Activated CD8-positive, alpha-beta T cell treated with anti-CD3 and anti-CD28 coated beads, Interleukin-2, amount 10 ng/mL, durations not matched to agents 7 days and 5 days (primary cell): ENCODE measurements at regions of chr19 and their contacts with region 1.

Region 1: GRCh38 chr19:45059278-45059965 is 16.9 kb downstream of the ZNF296 start:
- DNase-seq: peak; percentile 90
- ATAC-seq: peak; percentile 88
- H3K4me3 Mint-ChIP-seq: no peak overlapping the region
- H3K27ac Mint-ChIP-seq: no peak overlapping the region
- H3K4me1 Mint-ChIP-seq: no peaks in the 10 kb centered on the region
- H3K27me3 Mint-ChIP-seq: no peaks in the 10 kb centered on the region

Region 2: GRCh38 chr19:44988896-44989556 is 70.4 kb before region 1 on chr19:
- CTCF ChIA-PET with region 1: interaction called, 17 read pairs
- POLR2A ChIA-PET with region 1: no interaction called
- DNase-seq: peak; percentile 70
- ATAC-seq: peak; percentile 70
- H3K4me3 Mint-ChIP-seq: no peak overlapping the region
- H3K27ac Mint-ChIP-seq: no peak overlapping the region
- H3K4me1 Mint-ChIP-seq: peaks cover 10% of the 10 kb centered on the region
- H3K27me3 Mint-ChIP-seq: no peaks in the 10 kb centered on the region

Region 3: DNA sequence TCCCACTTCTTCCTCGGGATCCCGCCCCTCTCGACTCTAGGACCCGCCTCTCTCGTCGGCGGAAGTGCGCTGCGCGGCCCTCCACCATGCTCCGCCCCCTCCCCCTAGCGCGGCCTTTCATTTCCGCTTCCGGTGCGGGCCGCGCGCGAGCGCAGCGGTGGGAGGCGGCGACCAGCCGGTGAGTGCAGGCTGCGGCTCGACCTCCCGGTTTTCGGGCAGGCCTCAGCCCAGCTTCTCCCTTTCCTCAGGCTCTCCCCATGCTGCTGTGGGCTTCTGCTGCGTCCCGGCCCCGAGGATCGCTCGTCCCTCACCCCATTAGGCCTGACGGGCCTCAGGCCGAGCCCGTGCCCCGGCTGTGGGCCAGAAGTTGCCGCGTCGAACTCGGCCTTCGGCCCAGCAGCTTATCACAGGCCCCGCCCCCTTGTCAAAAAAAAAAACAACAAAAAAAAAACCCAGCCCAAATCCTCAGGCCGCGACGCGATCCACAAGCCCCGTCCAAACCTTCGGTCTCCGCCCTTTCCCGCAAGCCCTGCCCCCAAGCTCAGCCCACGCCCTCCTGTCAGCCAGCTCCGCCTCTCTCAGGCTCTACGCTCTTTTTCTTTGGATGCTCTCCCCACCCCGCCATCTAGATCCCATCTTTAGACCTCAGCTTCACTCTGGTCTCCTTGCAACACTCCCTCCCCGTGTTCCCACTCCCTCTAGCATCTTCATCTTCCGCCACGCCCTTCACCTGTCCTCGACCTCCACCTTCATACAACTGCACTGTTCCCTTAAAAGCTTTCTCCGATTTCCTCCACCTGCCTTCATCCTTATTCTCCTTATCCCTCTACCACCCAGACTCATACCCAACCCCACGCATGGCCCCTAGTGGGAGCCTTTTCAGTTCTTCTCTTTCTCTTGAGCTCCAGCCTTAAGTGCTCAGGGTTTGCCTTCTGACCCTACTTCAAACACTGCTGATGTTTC is 20.2 kb before region 1 on chr19 and contains the start of gene CLASRP:
- CTCF ChIA-PET with region 1: interaction called, 24 read pairs
- POLR2A ChIA-PET with region 1: interaction called, 3 read pairs
- DNase-seq: peak; percentile 92
- ATAC-seq: peak; percentile 94
- H3K4me3 Mint-ChIP-seq: peak within 1 kb of the TSS; percentile 90
- H3K27ac Mint-ChIP-seq: peak within 1 kb of the TSS; percentile 94
- H3K4me1 Mint-ChIP-seq: peaks cover 28% of the 10 kb centered on the region
- H3K27me3 Mint-ChIP-seq: no peaks in the 10 kb centered on the region
- total RNA-seq, gene CLASRP: 82.5 to 94.5 TPM

Region 4: DNA sequence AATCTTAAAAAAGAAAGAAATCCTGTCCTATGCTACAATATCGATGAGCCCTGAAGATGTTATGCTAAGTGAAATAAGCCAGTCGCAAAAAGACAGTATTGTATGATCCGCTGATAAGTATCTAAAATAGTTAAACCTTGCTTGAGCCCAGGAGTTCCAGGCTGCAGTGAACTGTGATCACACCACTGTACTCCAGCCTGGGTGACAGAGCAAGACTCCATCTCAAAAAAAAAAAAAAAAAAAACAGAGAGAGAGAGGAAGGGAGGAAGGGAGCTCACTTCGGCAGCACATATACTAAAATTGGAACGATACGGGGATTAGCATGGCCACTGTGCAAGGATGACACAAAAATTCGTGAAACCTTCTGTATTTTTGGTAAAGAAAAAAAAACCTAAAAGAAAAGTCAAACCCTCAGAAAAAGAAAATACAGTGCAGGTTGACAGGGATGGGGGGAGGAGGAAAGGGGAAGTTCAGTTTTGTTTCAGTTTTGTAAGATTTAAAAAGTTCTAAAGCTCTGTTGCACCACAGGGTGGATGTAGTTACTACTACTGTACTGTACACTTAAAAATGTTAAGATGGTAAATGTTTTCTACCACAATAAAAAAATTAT is 12.1 kb before region 1 on chr19:
- CTCF ChIA-PET with region 1: interaction called, 24 read pairs
- POLR2A ChIA-PET with region 1: interaction called, 3 read pairs
- DNase-seq: no peak
- ATAC-seq: no peak
- H3K4me3 Mint-ChIP-seq: peak overlapping the region; percentile 67
- H3K27ac Mint-ChIP-seq: peak overlapping the region; percentile 85
- H3K4me1 Mint-ChIP-seq: peaks cover 29% of the 10 kb centered on the region
- H3K27me3 Mint-ChIP-seq: no peaks in the 10 kb centered on the region

Region 5: DNA sequence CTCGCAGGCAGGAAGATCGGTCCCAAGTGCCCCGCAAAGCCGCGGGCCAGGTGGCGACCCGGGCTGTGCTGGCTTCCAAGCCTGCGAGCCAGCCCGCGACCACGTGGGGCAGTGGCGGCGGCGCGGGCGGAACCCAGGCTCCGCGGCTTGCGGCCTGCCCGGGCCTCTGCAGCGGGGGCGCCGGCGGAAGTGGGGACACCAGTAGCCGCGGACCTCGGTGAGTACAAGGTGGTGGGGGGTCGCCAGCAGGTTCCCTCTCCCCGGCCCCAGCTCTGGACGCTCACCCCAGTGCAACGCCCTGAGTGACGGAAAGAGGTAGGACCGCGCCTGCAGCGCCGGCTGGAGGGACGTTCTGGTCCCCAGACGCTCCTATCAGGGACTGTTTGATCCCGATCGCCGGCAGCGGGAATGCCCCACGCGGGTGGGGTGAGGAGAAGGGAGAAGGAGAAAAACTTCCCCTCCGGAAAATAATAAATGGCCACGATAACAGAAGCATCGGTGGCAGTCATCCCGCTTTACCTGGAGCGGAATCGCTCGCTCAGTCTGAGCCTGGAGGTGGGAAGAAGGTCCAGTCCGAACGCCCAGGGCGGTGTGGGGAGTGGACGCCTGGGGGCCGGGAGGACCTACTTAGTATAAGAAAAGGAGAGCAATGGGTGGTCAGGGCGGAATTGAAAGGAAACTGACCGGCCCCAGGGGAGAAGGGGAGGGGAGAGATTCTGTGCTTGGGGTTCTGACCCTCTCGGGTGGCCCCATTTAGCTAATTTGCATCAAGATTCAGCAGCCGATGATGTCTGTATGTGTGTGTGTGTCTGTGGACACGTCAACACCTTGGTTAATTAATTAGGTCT is 19.9 kb after region 1 on chr19 and contains the start of gene GEMIN7:
- CTCF ChIA-PET with region 1: interaction called, 10 read pairs
- POLR2A ChIA-PET with region 1: no interaction called
- DNase-seq: peak; percentile 82
- ATAC-seq: peak; percentile 63
- H3K4me3 Mint-ChIP-seq: peak within 1 kb of the TSS; percentile 98
- H3K27ac Mint-ChIP-seq: peak within 1 kb of the TSS; percentile 86
- H3K4me1 Mint-ChIP-seq: peaks cover 55% of the 10 kb centered on the region
- H3K27me3 Mint-ChIP-seq: no peaks in the 10 kb centered on the region
- total RNA-seq, gene GEMIN7: 30.2 to 31.7 TPM

Region 6: GRCh38 chr19:45092747-45093678 is 33.6 kb after region 1 on chr19 and contains the start of gene PPP1R37:
- CTCF ChIA-PET with region 1: interaction called, 10 read pairs
- POLR2A ChIA-PET with region 1: no interaction called
- DNase-seq: peak; percentile 94
- ATAC-seq: peak; percentile 82
- H3K4me3 Mint-ChIP-seq: peak within 1 kb of the TSS; percentile 83
- H3K27ac Mint-ChIP-seq: peak within 1 kb of the TSS; percentile 95
- H3K4me1 Mint-ChIP-seq: peaks cover 70% of the 10 kb centered on the region
- H3K27me3 Mint-ChIP-seq: no peaks in the 10 kb centered on the region
- total RNA-seq, gene PPP1R37: 28.3 to 29.2 TPM

Region 7: DNA sequence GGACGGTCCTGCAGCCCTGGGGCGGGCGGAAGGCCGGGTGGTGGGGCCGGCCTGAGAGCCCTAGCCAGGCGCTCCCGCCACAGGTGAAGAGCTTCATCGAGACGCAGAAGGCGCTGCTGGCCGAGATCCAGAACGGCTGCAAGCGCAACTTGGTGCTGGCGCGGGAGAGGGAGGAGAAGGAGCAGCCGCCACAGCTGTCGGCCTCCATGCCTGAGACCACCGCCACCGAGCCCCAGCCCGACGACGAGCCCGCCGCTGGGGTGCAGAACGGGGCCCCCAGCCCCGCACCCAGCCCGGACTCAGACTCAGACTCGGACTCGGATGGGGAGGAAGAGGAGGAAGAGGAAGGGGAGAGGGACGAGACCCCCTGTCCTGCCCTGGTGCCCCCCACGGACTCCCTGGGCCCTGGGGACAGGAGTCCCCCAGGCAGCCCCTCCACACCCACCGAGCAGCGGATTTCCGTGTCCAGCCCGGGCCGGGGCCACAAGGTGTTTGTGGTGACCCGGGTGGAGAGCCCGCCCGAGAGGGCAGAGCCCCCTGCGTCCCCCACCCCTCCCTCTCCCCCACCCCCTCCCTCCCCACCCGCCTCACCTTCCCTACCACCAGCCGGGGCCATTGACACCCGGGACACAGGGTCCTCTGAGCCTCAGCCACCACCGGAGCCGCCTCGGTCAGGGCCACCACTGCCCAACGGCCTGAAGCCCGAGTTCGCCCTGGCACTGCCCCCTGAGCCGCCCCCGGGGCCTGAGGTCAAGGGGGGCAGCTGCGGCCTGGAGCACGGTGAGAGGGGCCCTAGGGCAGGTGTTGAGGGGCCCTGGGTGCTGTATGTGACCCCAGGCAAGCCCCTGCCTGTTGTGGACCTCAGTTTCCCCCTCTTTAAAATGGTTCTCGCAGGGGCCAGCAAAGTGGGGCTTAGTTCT is 86.1 kb after region 1 on chr19:
- CTCF ChIA-PET with region 1: no interaction called
- POLR2A ChIA-PET with region 1: no interaction called
- DNase-seq: no peak
- ATAC-seq: no peak
- H3K4me3 Mint-ChIP-seq: no peak overlapping the region
- H3K27ac Mint-ChIP-seq: no peak overlapping the region
- H3K4me1 Mint-ChIP-seq: peaks cover 12% of the 10 kb centered on the region
- H3K27me3 Mint-ChIP-seq: no peaks in the 10 kb centered on the region